ENCODE measurements at regions of chr11 and their contacts with region 1.

Region 1: GRCh38 chr11:16678466-16679116 is 59.9 kb upstream of the C11orf58 start:
- DNase-seq: no peak
- ATAC-seq: no peak
- H3K4me3 ChIP-seq: no peak overlapping the region
- H3K4me3 Mint-ChIP-seq: no peak overlapping the region
- H3K27ac ChIP-seq: no peak overlapping the region
- H3K27ac Mint-ChIP-seq: no peak overlapping the region
- H3K4me1 ChIP-seq: no peaks in the 10 kb centered on the region
- H3K4me1 Mint-ChIP-seq: no peaks in the 10 kb centered on the region
- H3K27me3 ChIP-seq: no peaks in the 10 kb centered on the region
- H3K27me3 Mint-ChIP-seq: peaks cover 25% of the 10 kb centered on the region
- CTCF ChIP-seq: no peak

Region 2: DNA sequence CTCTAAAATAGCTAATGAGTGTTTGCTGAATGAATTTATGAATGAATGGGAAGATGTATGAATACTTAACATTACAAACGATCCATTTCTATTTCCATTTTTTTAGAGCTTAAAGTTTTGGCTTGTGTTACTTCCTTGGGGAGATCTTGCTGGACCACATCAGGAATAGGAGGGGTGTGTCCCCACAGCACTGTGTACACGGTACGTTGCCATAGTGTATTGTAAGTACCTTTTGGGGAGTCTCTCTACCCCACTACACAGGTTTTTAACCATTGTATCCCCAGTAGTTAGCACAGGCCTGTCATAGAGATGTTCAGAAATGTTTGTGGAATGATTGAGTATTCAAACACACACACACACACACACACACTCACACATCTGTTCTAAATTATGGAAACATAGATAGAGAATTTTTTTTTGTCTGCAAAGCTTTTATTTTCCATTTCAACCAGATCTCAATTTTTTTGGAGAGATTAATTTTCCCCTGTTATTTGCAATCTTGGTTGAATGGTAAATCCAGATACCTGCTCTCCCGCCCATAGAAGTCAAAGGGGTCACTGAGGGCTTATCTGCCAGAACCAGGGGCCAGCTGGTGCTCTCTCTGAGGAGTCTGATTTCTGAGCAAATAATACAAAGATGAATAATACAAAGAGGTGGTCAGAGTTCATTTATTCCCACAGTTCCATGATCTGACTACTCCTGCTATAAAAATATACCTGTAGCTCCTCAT is 1092.8 kb before region 1 on chr11:
- CTCF ChIA-PET with region 1: no interaction called
- POLR2A ChIA-PET with region 1: no interaction called
- intact Hi-C with region 1: loop called in 1 of 2 experiments (anchors 5 kb)
- DNase-seq: no peak
- ATAC-seq: no peak
- H3K4me3 ChIP-seq: no peak overlapping the region
- H3K4me3 Mint-ChIP-seq: no peak overlapping the region
- H3K27ac ChIP-seq: no peak overlapping the region
- H3K27ac Mint-ChIP-seq: no peak overlapping the region
- H3K4me1 ChIP-seq: no peaks in the 10 kb centered on the region
- H3K4me1 Mint-ChIP-seq: no peaks in the 10 kb centered on the region
- H3K27me3 ChIP-seq: no peaks in the 10 kb centered on the region
- H3K27me3 Mint-ChIP-seq: no peaks in the 10 kb centered on the region
- CTCF ChIP-seq: no peak

Region 3: GRCh38 chr11:17026487-17027082 is 348.0 kb after region 1 on chr11:
- CTCF ChIA-PET with region 1: no interaction called
- POLR2A ChIA-PET with region 1: no interaction called
- intact Hi-C with region 1: no loop called
- DNase-seq: no peak
- ATAC-seq: no peak
- H3K4me3 ChIP-seq: no peak overlapping the region
- H3K4me3 Mint-ChIP-seq: no peak overlapping the region
- H3K27ac ChIP-seq: no peak overlapping the region
- H3K27ac Mint-ChIP-seq: no peak overlapping the region
- H3K4me1 ChIP-seq: no peaks in the 10 kb centered on the region
- H3K4me1 Mint-ChIP-seq: no peaks in the 10 kb centered on the region
- H3K27me3 ChIP-seq: no peaks in the 10 kb centered on the region
- H3K27me3 Mint-ChIP-seq: no peaks in the 10 kb centered on the region
- CTCF ChIP-seq: no peak